Right ventricle myocardium superior (tissue), 1 donor: ENCODE measurements at regions of chr3 and their contacts with region 1.

Region 1: DNA sequence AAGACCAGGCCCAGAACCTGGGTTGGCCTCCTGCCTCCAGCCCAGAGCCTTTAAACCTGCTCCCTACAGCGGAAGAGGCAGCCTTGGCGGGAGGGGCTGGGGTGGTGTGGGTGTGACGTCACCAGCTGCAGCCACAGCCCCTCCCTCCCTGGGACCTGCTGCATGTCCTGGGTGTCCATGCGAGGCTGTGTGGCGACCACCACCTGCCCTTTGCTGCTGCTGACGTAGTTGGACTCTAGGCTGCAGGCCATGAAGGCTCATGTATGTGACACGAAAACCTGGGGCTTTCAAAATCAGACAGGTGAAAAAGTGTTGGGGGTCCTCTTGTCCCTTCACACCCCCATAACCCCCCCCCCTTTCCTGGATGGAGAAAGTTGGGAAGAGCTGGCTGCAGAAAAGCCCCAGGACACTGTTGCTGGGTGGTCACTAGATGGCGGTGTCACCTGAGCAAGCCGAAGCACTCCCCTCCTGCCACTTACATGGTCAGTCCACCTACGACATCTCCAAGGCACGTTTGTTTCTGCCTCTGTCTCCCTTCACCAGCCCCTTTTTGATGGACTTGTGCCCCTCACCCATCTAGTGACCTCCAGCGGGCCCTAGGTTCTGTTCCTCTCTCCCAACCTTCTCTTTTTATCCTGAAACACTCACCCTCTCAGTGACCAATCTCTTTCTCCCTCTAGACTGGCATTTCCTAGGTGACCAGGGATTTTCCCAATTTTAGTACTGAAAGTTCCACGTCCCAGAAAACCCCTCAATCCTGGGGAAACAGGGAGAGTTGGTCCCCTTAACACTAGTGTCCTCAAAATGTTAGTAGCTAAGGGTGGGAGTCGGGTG is 35.2 kb downstream of the SLC6A20 start:
- DNase-seq: no peak
- ATAC-seq: peak; percentile 90

Region 2: GRCh38 chr3:44208086-44208485 is 1553.0 kb before region 1 on chr3:
- intact Hi-C with region 1: no loop called
- DNase-seq: no peak
- ATAC-seq: no peak

Region 3: DNA sequence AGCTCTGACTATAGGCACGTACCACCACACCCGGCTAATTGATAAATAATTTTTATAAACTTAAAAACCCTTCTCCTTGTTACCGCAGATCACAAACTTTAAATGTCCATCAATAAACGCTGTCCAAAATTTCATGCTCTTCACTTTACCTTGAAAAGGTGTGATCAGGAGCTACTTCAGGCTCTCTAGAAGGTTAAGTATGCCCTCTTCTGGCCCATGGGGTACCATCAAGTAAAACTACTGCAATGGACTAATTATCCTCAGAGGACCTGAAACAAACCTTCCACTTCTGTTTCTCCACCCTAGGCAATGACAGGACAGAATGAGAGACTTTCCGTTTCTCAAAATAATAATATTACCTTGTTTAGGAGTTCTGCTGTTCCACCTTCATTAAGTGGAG is 71.6 kb after region 1 on chr3:
- intact Hi-C with region 1: loop called (anchors 2 kb)
- DNase-seq: no peak
- ATAC-seq: no peak

Region 4: GRCh38 chr3:45929042-45929679 is 168.1 kb after region 1 on chr3:
- intact Hi-C with region 1: loop called (anchors 5 kb)
- DNase-seq: peak; percentile 60
- ATAC-seq: peak; percentile 48

Region 5: GRCh38 chr3:46089237-46090011 is 328.3 kb after region 1 on chr3:
- intact Hi-C with region 1: loop called (anchors 10 kb)
- DNase-seq: peak; percentile 74
- ATAC-seq: peak; percentile 84